Tibial artery (tissue), 4 donors: ENCODE measurements at regions of chr4 and their contacts with region 1.

Region 1: DNA sequence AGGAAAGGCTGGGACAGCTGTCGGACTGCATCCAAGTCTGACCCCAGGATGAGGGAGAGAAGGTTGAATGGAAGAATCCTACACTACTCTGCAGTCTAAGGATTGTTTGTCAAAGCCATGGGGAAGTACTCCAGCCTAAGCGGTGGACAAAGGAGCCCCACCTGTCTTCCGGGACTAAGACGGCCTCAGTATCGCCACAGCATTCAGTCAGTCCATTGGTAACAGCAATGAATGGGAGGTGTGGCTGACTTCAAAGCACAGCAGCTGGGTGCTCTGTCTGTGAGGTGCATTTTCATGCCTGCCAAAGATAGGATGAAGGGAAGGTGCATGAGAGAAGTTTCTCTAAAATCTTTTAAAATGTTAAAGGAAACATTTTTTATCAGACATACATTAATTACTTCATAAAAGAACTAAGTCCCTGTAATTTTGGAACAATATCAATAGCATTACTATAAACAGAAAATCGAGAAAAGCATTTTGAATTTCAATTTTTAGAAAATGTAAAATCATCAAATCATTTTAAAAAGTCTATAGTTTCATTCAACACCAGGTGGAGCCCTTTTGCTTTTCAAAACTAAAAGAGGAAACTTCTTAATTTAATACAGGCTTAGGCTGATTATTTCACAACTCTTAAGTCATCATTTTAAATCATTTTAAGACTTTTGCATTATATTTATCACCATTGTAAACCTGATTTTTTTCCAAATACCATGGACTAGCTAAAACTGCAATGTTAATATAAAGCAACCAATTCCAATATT is 27.6 kb upstream of the INTU start:
- DNase-seq: no peak
- H3K4me3 ChIP-seq: no peak overlapping the region
- H3K27ac ChIP-seq: no peak overlapping the region
- H3K4me1 ChIP-seq: no peaks in the 10 kb centered on the region
- H3K27me3 ChIP-seq: peaks cover 0 to 6% of the 10 kb centered on the region in 2 donors
- CTCF ChIP-seq: peak; percentile 56 to 63

Region 2: DNA sequence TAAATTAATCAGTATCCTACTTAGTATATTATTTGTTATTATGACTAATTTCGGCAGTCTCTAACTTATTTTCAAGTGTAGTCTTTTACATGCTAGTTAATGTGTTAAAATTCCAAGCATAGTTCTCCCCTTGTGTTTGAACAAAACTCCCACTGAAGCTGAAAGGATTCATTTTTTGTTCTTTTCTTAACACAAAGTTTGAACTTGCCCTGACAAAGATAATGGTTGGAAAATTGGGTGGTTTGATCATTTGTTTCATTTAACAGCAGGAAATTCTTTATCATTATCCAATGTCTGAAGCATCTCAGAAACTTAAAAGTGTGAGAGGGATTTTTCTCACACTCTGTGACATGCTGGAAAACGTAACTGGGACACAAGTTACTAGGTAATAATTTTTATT is 63.6 kb after region 1 on chr4:
- intact Hi-C with region 1: no loop called
- DNase-seq: no peak
- H3K4me3 ChIP-seq: no peak overlapping the region
- H3K27ac ChIP-seq: no peak overlapping the region
- H3K4me1 ChIP-seq: no peaks in the 10 kb centered on the region
- H3K27me3 ChIP-seq: no peaks in the 10 kb centered on the region
- CTCF ChIP-seq: no peak

Region 3: DNA sequence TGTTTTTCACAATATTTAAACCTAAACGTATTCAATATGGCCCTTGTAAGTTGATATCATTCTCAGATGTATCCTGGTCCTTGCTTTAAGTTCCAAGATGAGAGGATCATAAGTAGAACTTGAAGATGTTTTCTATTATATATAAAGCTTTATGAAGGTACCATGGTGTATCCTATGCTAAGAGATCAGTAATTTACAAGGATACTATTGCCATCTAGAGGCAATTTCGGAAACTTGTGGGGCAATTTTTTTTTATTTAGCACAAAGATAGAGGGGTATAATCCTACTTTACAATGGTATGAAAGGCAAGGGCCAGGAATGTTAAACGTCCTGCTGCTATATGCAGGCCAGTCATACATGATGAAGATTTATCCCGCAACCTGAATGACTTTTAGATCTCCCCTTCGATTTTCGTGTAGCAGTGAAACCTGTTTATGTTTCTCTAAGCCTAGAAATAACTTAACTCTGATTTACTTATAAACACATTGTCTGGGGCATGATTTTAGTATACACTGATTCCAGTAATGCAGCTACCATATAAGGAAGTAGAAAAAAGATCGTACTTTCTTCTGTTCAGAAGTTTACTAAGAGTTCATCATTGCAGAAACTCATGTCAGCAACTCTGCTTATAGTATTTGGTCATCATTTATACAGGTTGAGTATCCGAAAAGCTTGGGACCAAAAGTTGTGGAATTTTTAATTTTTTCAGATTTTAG is 127.6 kb after region 1 on chr4:
- intact Hi-C with region 1: loop called (anchors 5 kb)
- DNase-seq: no peak
- H3K4me3 ChIP-seq: no peak overlapping the region
- H3K27ac ChIP-seq: no peak overlapping the region
- H3K4me1 ChIP-seq: no peaks in the 10 kb centered on the region
- H3K27me3 ChIP-seq: no peaks in the 10 kb centered on the region
- CTCF ChIP-seq: peak; percentile 62 to 68